Heart right ventricle (tissue), 16 donors: ENCODE measurements at regions of chr7 and their contacts with region 1.

Region 1: DNA sequence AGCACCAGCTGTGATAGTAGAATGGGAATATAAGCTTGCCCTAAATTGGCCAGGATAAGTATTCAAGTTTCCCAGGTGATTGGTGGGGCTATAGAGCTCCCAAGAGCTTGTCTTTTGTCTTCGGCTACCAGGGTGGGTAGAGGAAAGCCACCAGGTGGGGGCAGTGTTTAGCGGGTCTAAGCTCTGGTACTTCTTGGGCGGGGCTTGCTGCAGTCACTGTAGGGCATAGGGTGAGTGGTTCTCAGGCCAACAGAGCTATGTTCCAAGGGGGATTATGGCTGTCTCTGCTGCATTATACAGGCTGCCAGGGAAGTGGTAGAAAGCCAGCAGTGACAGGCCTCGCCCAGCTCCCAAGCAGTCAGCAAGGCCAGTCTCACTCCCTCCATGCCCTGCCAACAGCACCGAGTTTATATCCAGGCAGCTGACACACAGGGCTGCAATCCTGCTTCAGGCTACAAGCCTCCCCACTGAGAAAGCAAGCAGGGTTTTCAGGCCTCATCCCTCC is 110.7 kb downstream of the ZNF467 start:
- DNase-seq: peak; percentile 46 to 49
- ATAC-seq: peak in 7 of 8 donors; percentile 67 to 93 (median 89)
- H3K4me3 ChIP-seq: no peak overlapping the region
- H3K27ac ChIP-seq: no peak overlapping the region
- H3K4me1 ChIP-seq: no peaks in the 10 kb centered on the region
- H3K27me3 ChIP-seq: peaks cover 0 to 7% (median 0%) of the 10 kb centered on the region in 7 donors
- CTCF ChIP-seq: peak in 8 of 9 donors; percentile 26 to 61 (median 55)

Region 2: DNA sequence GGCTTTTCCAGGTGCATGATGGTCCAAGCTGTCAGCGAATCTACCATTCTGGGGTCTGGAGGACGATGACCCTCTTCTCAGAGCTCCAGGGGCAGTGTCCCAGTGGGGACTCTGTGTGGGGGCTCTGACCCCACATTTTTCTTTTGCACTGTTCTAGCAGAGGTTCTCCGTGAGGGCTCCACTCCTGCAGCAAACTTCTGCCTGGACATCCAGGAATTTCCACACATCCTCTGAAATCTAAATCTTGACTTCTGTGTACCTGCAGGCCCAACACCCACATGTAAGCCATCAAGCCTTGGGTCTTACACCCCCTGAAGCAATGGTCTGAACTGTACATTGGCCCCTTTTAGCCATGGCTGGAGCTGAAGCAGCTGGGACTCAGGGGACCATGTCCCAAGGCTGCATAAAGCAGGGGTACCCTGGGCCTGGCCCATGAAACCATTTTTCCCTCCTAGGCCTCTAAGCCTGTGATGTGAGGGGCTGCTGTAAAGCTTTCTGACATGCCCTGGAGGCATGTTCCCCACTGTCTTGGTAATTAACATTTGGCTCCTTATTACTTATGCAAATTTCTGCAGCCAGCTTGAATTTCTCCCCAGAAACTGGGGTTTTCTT is 313.8 kb before region 1 on chr7:
- intact Hi-C with region 1: no loop called
- DNase-seq: no peak
- ATAC-seq: no peak
- H3K4me3 ChIP-seq: no peak overlapping the region
- H3K27ac ChIP-seq: no peak overlapping the region
- H3K4me1 ChIP-seq: no peaks in the 10 kb centered on the region
- H3K27me3 ChIP-seq: peaks cover 0 to 3% (median 0%) of the 10 kb centered on the region in 7 donors
- CTCF ChIP-seq: no peak

Region 3: DNA sequence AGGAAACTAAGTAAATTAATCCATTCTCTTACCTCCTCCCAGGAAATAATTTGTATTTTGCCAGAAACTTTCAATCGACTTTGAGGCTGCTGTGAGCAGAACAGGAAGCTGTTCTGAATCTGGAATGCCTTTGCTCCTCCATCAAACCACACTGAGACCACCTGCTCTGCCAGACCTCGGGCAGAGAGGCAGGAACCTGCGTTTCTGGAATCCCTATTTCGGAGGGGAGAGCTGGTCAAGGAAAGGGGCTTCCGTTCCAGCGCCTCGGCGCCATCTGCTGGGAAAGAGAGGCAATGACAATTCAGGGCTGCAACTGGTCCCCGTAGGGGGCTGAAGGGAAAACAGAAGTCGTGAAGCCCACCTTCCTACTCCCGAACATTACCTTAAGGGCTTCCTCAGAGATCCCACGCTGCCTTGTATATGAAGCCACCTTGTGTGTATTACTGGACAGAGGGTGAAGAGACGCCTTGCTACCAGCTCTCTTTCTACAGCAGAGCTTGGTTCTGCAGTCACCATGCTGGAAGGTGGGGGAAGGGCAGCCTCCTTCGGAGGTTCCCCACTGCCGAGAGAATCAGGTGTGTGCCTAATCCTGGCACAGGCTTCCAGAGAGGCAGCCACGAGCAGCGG is 79.5 kb after region 1 on chr7:
- intact Hi-C with region 1: loop called in 4 of 10 experiments (anchors 2 to 5 kb)
- DNase-seq: peak; percentile 69 to 70
- ATAC-seq: peak; percentile 76 to 92 (median 88)
- H3K4me3 ChIP-seq: peak overlapping the region in 9 of 10 donors; percentile 24 to 50 (median 43)
- H3K27ac ChIP-seq: peak overlapping the region in 2 of 10 donors; percentile 32 to 36
- H3K4me1 ChIP-seq: peaks cover 5 to 14% (median 10%) of the 10 kb centered on the region in 9 donors
- H3K27me3 ChIP-seq: peaks cover 0 to 10% (median 0%) of the 10 kb centered on the region in 7 donors
- CTCF ChIP-seq: peak; percentile 71 to 96 (median 92)

Region 4: GRCh38 chr7:149873074-149873969 is 210.7 kb after region 1 on chr7 and contains the start of gene ATP6V0E2:
- intact Hi-C with region 1: no loop called
- DNase-seq: peak; percentile 95 to 97
- ATAC-seq: peak; percentile 93 to 97 (median 95)
- H3K4me3 ChIP-seq: peak within 1 kb of the TSS; percentile 70 to 95 (median 81)
- H3K27ac ChIP-seq: peak within 1 kb of the TSS; percentile 81 to 97 (median 92)
- H3K4me1 ChIP-seq: peaks cover 8 to 56% (median 25%) of the 10 kb centered on the region in 9 donors
- H3K27me3 ChIP-seq: no peaks in the 10 kb centered on the region
- CTCF ChIP-seq: no peak
- total RNA-seq, gene ATP6V0E2: 69.2 to 119 (median 96.7) TPM